Caco-2 (cell line): ENCODE measurements at regions of chr4 and their contacts with region 1.

Region 1: DNA sequence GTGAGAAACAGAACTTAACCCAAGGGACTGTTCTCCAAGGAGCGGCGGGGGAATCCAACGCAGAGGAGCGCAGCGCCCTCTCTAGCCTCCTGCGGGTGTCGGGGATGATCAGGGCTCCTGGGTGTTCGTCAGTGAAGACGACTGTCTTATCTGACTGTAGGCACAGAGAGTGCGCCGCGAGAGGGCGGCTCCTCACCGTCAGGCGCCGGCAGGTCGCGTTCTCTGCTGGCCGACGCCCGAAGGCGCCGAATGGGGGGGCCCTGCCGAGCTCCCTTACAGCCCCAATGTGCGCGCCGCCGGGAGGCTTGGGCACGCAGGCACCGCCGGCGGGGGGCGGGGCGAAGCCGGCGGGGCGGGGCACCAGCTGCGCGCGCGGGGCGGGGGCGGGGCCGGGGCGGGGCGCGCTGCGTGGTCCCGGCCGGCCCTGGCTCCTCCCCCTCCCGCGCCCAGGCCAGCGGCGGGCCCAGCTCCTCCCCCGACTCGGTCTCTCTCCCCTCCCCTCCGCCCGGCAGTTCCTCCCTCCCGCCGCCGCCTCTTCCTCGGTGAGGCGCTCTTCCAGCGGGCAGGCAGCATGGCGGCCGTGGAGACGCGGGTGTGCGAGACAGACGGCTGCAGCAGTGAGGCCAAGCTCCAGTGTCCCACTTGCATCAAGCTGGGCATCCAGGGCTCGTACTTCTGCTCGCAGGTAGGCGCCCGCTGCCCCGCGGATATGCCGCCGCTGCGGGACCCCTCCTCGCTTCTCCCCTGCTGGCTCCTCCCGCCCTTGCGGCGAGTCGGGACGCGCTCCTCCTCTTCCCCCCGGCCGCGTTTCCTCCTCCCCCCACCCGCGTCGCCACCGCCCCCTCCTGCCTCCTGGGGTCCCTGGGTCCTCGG is at the start of gene METAP1:
- DNase-seq: peak; percentile 96
- H3K4me3 ChIP-seq: peak within 1 kb of the TSS; percentile 97
- H3K4me3 Mint-ChIP-seq: peak within 1 kb of the TSS; percentile 85
- H3K27ac Mint-ChIP-seq: peak within 1 kb of the TSS; percentile 81
- H3K4me1 ChIP-seq: peaks cover 26% of the 10 kb centered on the region
- H3K4me1 Mint-ChIP-seq: peaks cover 25% of the 10 kb centered on the region
- H3K27me3 ChIP-seq: no peaks in the 10 kb centered on the region
- H3K27me3 Mint-ChIP-seq: no peaks in the 10 kb centered on the region
- CTCF ChIP-seq: peak; percentile 39 to 80
- total RNA-seq, gene METAP1: 75.2 and 83.0 TPM in 2 replicates

Region 2: GRCh38 chr4:98143001-98143899 is 852.2 kb before region 1 on chr4 and contains the start of gene STPG2:
- CTCF ChIA-PET with region 1: no interaction called
- POLR2A ChIA-PET with region 1: no interaction called
- intact Hi-C with region 1: loop called (anchors 5 kb)
- DNase-seq: peak; percentile 94
- H3K4me3 ChIP-seq: peak within 1 kb of the TSS; percentile 48
- H3K4me3 Mint-ChIP-seq: peak within 1 kb of the TSS; percentile 96
- H3K27ac Mint-ChIP-seq: peak within 1 kb of the TSS; percentile 95
- H3K4me1 ChIP-seq: peaks cover 5% of the 10 kb centered on the region; the same call in 1 of the 2 replicates
- H3K4me1 Mint-ChIP-seq: peaks cover 16% of the 10 kb centered on the region
- H3K27me3 ChIP-seq: no peaks in the 10 kb centered on the region
- H3K27me3 Mint-ChIP-seq: peaks cover under 1% of the 10 kb centered on the region
- CTCF ChIP-seq: peak; percentile 50 to 76
- total RNA-seq, gene STPG2: not detected in 2 replicates

Region 3: DNA sequence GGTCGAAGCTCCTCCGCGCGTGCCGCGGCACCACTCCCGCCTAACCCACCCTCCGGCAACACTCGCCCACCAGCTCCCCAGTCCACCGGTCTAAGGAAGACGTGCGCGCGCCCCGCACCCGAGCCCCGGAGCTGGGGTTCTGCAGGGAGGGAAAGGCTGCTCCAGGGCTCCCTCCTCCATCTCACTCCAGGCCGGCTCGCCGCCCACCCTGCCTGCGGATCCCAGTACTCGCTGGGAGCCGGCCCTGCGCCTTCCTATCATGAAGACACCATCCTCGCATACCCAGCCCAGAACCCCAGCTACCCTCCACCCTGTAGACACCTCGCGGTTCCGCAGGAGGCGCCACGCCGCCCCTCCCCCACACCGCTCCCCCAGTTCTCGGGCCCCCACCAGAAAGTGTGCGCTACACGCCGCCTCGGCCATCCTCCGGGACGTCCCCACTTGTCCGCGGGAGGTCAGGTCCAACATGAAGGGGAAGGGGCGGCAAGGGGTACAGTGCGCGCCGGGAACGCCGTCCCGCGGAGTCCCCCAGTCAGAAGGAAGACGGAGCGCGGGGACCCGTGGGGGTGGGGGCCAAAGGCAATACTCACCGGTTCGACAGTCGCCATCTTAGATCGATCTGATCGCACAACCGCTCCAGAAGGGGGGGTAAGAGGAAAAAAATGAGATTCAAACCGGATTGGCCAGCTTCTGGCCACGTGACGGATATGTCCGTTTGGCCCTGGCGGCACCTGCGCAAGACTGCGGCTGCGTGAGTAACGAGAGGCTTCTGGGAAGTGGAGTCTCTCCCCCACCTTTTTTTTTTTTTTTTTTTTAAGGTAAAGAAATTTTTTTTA is 66.7 kb before region 1 on chr4 and contains the start of gene EIF4E:
- CTCF ChIA-PET with region 1: interaction called, 12 read pairs
- POLR2A ChIA-PET with region 1: interaction called, 16 read pairs
- intact Hi-C with region 1: loop called (anchors 2 kb)
- DNase-seq: peak; percentile 97 to 99
- H3K4me3 ChIP-seq: peak within 1 kb of the TSS; percentile 95
- H3K4me3 Mint-ChIP-seq: peak within 1 kb of the TSS; percentile 81
- H3K27ac Mint-ChIP-seq: peak within 1 kb of the TSS; percentile 85
- H3K4me1 ChIP-seq: peaks cover 6% of the 10 kb centered on the region
- H3K4me1 Mint-ChIP-seq: peaks cover 7% of the 10 kb centered on the region
- H3K27me3 ChIP-seq: no peaks in the 10 kb centered on the region
- H3K27me3 Mint-ChIP-seq: no peaks in the 10 kb centered on the region
- CTCF ChIP-seq: peak in 1 of 2 experiments; percentile 10
- total RNA-seq, gene EIF4E: 140 and 151 TPM in 2 replicates

Region 4: GRCh38 chr4:99028187-99028586 is 32.8 kb after region 1 on chr4:
- CTCF ChIA-PET with region 1: interaction called, 11 read pairs
- POLR2A ChIA-PET with region 1: interaction called, 10 read pairs
- intact Hi-C with region 1: loop called (anchors 1 kb)
- DNase-seq: no peak
- H3K4me3 ChIP-seq: no peak overlapping the region; the same call in 1 of the 2 replicates
- H3K4me3 Mint-ChIP-seq: peak overlapping the region; percentile 53
- H3K27ac Mint-ChIP-seq: peak overlapping the region; percentile 99
- H3K4me1 ChIP-seq: peaks cover 59% of the 10 kb centered on the region
- H3K4me1 Mint-ChIP-seq: peaks cover 36% of the 10 kb centered on the region
- H3K27me3 ChIP-seq: no peaks in the 10 kb centered on the region
- H3K27me3 Mint-ChIP-seq: no peaks in the 10 kb centered on the region
- CTCF ChIP-seq: no peak

Region 5: DNA sequence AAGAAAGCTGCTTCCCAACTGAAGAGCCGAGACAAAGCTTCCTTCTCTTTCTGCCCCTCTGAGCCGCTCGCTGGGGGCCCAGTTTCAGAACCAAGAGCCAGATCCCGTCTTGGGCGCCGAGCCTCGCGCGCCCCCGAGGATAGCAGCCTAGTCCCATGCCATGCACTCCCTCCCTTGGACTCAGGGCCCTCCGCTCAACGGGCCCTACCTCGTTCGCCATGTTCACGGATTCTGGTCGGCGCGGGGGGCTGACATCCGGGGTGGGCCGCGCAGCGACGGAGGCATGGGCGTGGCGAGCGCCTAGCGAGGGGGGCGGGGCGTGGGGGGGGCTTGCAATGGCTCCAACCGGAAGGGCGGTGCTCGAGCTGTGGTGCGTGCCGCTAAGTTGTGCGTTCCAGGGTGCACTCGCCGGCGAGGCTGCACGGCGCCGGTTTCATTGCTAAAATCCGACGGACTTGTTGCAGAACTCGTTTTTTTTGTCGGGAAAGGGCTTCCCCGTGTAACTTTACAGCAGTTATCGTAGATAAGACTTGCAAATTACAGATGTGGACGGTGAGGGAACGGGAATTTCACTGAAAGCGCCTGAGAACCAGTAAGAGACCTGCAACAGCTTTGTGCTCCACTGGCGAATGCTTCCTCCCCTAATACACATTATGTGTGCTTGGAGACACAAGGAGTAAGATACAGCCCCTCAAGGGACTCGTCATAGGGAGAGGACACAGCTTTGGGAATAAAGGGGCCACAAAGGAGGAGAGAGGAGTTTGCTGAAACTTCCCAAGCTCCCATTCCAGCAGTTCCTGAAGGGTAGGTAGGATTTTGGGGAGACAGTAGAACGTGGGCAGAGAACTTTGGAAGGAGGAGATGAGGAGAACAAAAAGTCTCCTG is 93.3 kb after region 1 on chr4 and contains the start of gene ADH5:
- CTCF ChIA-PET with region 1: interaction called, 14 read pairs
- POLR2A ChIA-PET with region 1: interaction called, 8 read pairs
- intact Hi-C with region 1: no loop called
- DNase-seq: peak; percentile 80 to 85
- H3K4me3 ChIP-seq: peak within 1 kb of the TSS; percentile 83
- H3K4me3 Mint-ChIP-seq: peak within 1 kb of the TSS; percentile 98
- H3K27ac Mint-ChIP-seq: peak within 1 kb of the TSS; percentile 98
- H3K4me1 ChIP-seq: peaks cover 13% of the 10 kb centered on the region
- H3K4me1 Mint-ChIP-seq: peaks cover 29% of the 10 kb centered on the region
- H3K27me3 ChIP-seq: no peaks in the 10 kb centered on the region
- H3K27me3 Mint-ChIP-seq: no peaks in the 10 kb centered on the region
- CTCF ChIP-seq: no peak
- total RNA-seq, gene ADH5: 144 and 161 TPM in 2 replicates

Region 6: GRCh38 chr4:99462875-99463464 is 467.6 kb after region 1 on chr4:
- CTCF ChIA-PET with region 1: interaction called, 6 read pairs
- POLR2A ChIA-PET with region 1: no interaction called
- intact Hi-C with region 1: loop called (anchors 1 kb)
- DNase-seq: peak; percentile 60 to 75
- H3K4me3 ChIP-seq: no peak overlapping the region
- H3K4me3 Mint-ChIP-seq: no peak overlapping the region
- H3K27ac Mint-ChIP-seq: no peak overlapping the region
- H3K4me1 ChIP-seq: peaks cover 8% of the 10 kb centered on the region; the same call in 1 of the 2 replicates
- H3K4me1 Mint-ChIP-seq: peaks cover 9% of the 10 kb centered on the region
- H3K27me3 ChIP-seq: no peaks in the 10 kb centered on the region
- H3K27me3 Mint-ChIP-seq: peaks cover 4% of the 10 kb centered on the region
- CTCF ChIP-seq: peak; percentile 72 to 85